MCF 10A (cell line): ENCODE measurements at regions of chr4 and their contacts with region 1.

Region 1: GRCh38 chr4:142846729-142847596 is 862 bp upstream of the INPP4B start:
- DNase-seq: peak; percentile 79
- H3K4me3 Mint-ChIP-seq: peak overlapping the region; percentile 82
- H3K27ac Mint-ChIP-seq: no peak overlapping the region
- H3K4me1 Mint-ChIP-seq: peaks cover 6% of the 10 kb centered on the region
- H3K27me3 Mint-ChIP-seq: no peaks in the 10 kb centered on the region
- CTCF ChIP-seq: peak; percentile 79

Region 2: GRCh38 chr4:141307241-141307689 is 1539.7 kb before region 1 on chr4:
- CTCF ChIA-PET with region 1: no interaction called
- POLR2A ChIA-PET with region 1: no interaction called
- intact Hi-C with region 1: loop called (anchors 2 kb)
- DNase-seq: peak; percentile 69
- H3K4me3 Mint-ChIP-seq: no peak overlapping the region
- H3K27ac Mint-ChIP-seq: peak overlapping the region; percentile 17
- H3K4me1 Mint-ChIP-seq: no peaks in the 10 kb centered on the region
- H3K27me3 Mint-ChIP-seq: no peaks in the 10 kb centered on the region
- CTCF ChIP-seq: peak; percentile 77

Region 3: DNA sequence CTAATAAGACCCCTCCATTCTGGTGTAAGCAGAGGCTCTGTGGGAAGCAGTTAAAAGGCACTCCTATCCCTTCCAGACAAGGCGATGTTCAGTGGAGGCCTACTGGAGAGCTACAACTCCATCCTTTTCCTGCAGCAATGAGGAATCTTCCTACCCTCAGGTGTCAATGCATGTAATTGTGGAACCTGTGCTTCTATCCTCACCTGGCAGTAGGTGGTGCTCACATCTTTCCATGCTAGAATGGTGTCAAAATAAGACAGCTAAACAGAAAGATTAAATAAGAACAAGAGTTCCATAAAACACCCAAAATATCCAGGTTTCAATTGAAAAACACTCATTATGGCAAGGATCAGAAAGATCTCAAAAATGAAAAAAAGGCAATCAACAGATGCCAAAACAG is 986.0 kb before region 1 on chr4:
- CTCF ChIA-PET with region 1: interaction called, 4 read pairs
- POLR2A ChIA-PET with region 1: no interaction called
- intact Hi-C with region 1: loop called (anchors 5 kb)
- DNase-seq: peak; percentile 47
- H3K4me3 Mint-ChIP-seq: no peak overlapping the region
- H3K27ac Mint-ChIP-seq: no peak overlapping the region
- H3K4me1 Mint-ChIP-seq: no peaks in the 10 kb centered on the region
- H3K27me3 Mint-ChIP-seq: no peaks in the 10 kb centered on the region
- CTCF ChIP-seq: peak; percentile 20

Region 4: GRCh38 chr4:142126890-142127497 is 720.0 kb before region 1 on chr4:
- CTCF ChIA-PET with region 1: interaction called, 7 read pairs
- POLR2A ChIA-PET with region 1: no interaction called
- intact Hi-C with region 1: loop called (anchors 1 kb)
- DNase-seq: peak; percentile 66
- H3K4me3 Mint-ChIP-seq: no peak overlapping the region
- H3K27ac Mint-ChIP-seq: no peak overlapping the region
- H3K4me1 Mint-ChIP-seq: peaks cover 7% of the 10 kb centered on the region
- H3K27me3 Mint-ChIP-seq: no peaks in the 10 kb centered on the region
- CTCF ChIP-seq: peak; percentile 79

Region 5: DNA sequence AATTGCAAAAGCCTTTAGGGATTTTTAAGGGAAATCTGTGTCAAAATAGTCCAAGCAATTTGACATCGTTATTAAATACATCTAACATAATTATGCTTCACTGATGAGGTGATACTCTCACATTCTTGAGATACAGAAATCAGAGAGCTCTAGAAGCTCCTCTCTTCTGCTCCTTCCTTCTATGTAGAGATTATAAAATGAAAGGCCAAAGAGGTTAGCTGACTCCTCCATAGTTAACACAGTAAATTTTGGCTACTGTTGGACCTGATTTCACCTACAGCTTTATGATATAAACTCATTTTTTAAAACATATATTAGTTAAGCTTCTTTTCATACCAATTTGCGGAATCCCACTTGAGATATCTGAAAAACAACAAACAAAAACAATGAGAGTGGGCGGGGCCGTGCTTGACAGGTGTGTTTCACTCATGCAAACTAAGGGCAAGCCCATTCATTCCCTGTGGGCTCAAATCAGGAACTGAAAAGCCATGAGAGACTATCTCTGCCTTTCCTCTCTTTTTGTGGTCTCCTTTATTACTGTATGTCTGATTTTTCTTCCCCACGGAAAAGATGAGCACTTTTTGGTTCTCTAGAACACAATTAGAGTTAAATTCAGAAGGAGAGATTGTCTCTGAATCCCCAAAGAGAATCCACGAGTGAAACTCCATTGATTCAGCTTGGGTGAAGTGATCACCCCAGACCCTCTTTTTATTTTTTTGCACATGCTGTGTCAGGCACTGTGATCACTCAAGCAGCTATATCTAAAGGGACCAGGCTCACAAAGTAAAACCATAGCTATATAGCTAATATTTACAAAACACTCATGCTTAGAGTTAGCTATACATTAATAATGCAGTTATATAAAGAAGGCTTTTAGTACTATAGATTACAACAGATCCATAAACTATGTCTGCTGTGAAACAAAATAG is 644.3 kb before region 1 on chr4:
- CTCF ChIA-PET with region 1: no interaction called
- POLR2A ChIA-PET with region 1: interaction called, 3 read pairs
- intact Hi-C with region 1: loop called (anchors 10 kb)
- DNase-seq: no peak
- H3K4me3 Mint-ChIP-seq: no peak overlapping the region
- H3K27ac Mint-ChIP-seq: no peak overlapping the region
- H3K4me1 Mint-ChIP-seq: no peaks in the 10 kb centered on the region
- H3K27me3 Mint-ChIP-seq: no peaks in the 10 kb centered on the region
- CTCF ChIP-seq: no peak

Region 6: GRCh38 chr4:142549726-142550463 is 297.1 kb before region 1 on chr4:
- CTCF ChIA-PET with region 1: no interaction called
- POLR2A ChIA-PET with region 1: no interaction called
- intact Hi-C with region 1: loop called (anchors 10 kb)
- DNase-seq: peak; percentile 58
- H3K4me3 Mint-ChIP-seq: no peak overlapping the region
- H3K27ac Mint-ChIP-seq: peak overlapping the region; percentile 77
- H3K4me1 Mint-ChIP-seq: peaks cover 30% of the 10 kb centered on the region
- H3K27me3 Mint-ChIP-seq: no peaks in the 10 kb centered on the region
- CTCF ChIP-seq: no peak

Region 7: DNA sequence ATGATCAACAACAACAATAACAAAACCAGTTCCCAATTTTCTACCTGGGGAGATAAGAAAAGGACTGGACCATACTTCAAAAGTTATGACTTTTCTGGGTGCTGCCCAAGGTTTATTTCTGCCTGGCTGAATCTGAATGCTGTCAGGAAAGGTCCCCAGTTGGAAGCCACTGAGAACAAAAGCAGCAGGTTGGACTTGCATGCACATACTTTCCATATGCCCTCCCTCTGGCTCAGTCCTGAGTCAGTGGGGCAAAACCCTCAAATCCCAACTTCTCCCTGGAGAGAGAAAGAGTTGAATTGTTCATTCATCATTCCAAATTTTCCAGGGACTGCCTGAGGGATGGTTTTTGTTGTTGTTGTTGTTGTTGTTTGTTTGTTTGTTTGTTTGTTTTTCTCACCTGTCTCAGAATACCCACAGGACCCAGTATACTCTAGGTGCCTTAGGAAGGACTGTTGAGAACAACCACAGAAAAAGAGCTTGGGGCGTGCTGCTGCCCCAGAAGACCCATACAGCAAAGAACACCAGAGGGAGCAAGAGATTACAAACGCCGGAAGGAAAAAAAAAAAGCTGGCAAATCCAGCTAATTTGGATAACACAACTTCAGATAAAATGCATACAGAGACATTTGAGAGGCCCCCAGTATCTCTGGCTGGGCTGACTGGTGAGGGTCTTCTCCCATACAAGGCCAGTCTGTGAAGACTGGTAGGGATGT is 138.1 kb after region 1 on chr4:
- CTCF ChIA-PET with region 1: no interaction called
- POLR2A ChIA-PET with region 1: no interaction called
- intact Hi-C with region 1: no loop called
- DNase-seq: peak; percentile 55
- H3K4me3 Mint-ChIP-seq: no peak overlapping the region
- H3K27ac Mint-ChIP-seq: no peak overlapping the region
- H3K4me1 Mint-ChIP-seq: no peaks in the 10 kb centered on the region
- H3K27me3 Mint-ChIP-seq: peaks cover 92% of the 10 kb centered on the region
- CTCF ChIP-seq: peak; percentile 0

Region 8: GRCh38 chr4:143085224-143085623 is 238.3 kb after region 1 on chr4:
- CTCF ChIA-PET with region 1: interaction called, 4 read pairs
- POLR2A ChIA-PET with region 1: no interaction called
- intact Hi-C with region 1: loop called (anchors 1 kb)
- DNase-seq: peak; percentile 17
- H3K4me3 Mint-ChIP-seq: no peak overlapping the region
- H3K27ac Mint-ChIP-seq: no peak overlapping the region
- H3K4me1 Mint-ChIP-seq: peaks cover 14% of the 10 kb centered on the region
- H3K27me3 Mint-ChIP-seq: no peaks in the 10 kb centered on the region
- CTCF ChIP-seq: peak; percentile 31

Region 9: DNA sequence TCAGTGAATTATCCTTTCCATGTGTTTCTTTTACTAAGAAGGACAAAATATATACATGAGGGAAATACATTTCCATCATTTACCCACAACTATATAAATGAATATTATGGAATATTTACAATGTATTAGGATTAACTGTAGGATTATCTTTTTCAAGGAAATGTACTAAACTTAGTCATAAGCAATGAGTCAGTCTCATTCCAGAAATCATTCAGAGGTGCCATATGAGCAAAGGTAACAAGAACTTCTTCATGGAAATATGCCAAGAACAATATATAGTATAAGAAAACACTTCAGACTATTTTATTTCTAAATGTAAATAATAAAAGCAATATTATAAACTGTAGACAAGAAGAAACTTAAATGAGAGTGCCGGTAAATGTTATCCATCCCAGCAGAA is 404.8 kb after region 1 on chr4:
- CTCF ChIA-PET with region 1: no interaction called
- POLR2A ChIA-PET with region 1: no interaction called
- intact Hi-C with region 1: no loop called
- DNase-seq: peak; percentile 77
- H3K4me3 Mint-ChIP-seq: no peak overlapping the region
- H3K27ac Mint-ChIP-seq: no peak overlapping the region
- H3K4me1 Mint-ChIP-seq: peaks cover 42% of the 10 kb centered on the region
- H3K27me3 Mint-ChIP-seq: no peaks in the 10 kb centered on the region
- CTCF ChIP-seq: no peak

Region 10: GRCh38 chr4:143679434-143679833 is 832.5 kb after region 1 on chr4:
- CTCF ChIA-PET with region 1: no interaction called
- POLR2A ChIA-PET with region 1: no interaction called
- intact Hi-C with region 1: no loop called
- DNase-seq: no peak
- H3K4me3 Mint-ChIP-seq: no peak overlapping the region
- H3K27ac Mint-ChIP-seq: no peak overlapping the region
- H3K4me1 Mint-ChIP-seq: no peaks in the 10 kb centered on the region
- H3K27me3 Mint-ChIP-seq: peaks cover 13% of the 10 kb centered on the region
- CTCF ChIP-seq: no peak